ENCODE measurements at regions of chr3 and their contacts with region 1.

Region 1: GRCh38 chr3:17055374-17056276 is 170.9 kb downstream of the PLCL2 start:
- DNase-seq: peak; percentile 90
- ATAC-seq: peak; percentile 79
- H3K4me3 ChIP-seq: no peak overlapping the region
- H3K27ac ChIP-seq: peak overlapping the region; percentile 97
- H3K4me1 ChIP-seq: peaks cover 34% of the 10 kb centered on the region
- H3K27me3 ChIP-seq: no peaks in the 10 kb centered on the region
- CTCF ChIP-seq: no peak
- EP300 ChIP-seq: peak; percentile 73 to 88
- POLR2A ChIP-seq: no peak
- RAD21 ChIP-seq: peak; percentile 16; the same call in 1 of the 2 replicates

Region 2: GRCh38 chr3:16467393-16467792 is 588.2 kb before region 1 on chr3:
- CTCF ChIA-PET with region 1: no interaction called
- POLR2A ChIA-PET with region 1: no interaction called
- RAD21 ChIA-PET with region 1: no interaction called
- SMC1A ChIA-PET with region 1: no interaction called
- in situ Hi-C with region 1: no loop called
- intact Hi-C with region 1: no loop called
- DNase-seq: peak; percentile 28
- ATAC-seq: peak; percentile 93
- H3K4me3 ChIP-seq: no peak overlapping the region
- H3K27ac ChIP-seq: peak overlapping the region; percentile 53
- H3K4me1 ChIP-seq: peaks cover 28% of the 10 kb centered on the region
- H3K27me3 ChIP-seq: no peaks in the 10 kb centered on the region
- CTCF ChIP-seq: no peak
- EP300 ChIP-seq: no peak
- POLR2A ChIP-seq: peak; percentile 49; the same call in 1 of the 2 replicates
- RAD21 ChIP-seq: no peak

Region 3: GRCh38 chr3:16741103-16741758 is 314.4 kb before region 1 on chr3:
- CTCF ChIA-PET with region 1: no interaction called
- POLR2A ChIA-PET with region 1: no interaction called
- RAD21 ChIA-PET with region 1: no interaction called
- SMC1A ChIA-PET with region 1: no interaction called
- in situ Hi-C with region 1: no loop called
- intact Hi-C with region 1: no loop called
- DNase-seq: no peak
- ATAC-seq: no peak
- H3K4me3 ChIP-seq: no peak overlapping the region
- H3K27ac ChIP-seq: no peak overlapping the region
- H3K4me1 ChIP-seq: no peaks in the 10 kb centered on the region
- H3K27me3 ChIP-seq: no peaks in the 10 kb centered on the region; a peak in 1 of 4 replicates
- CTCF ChIP-seq: no peak
- EP300 ChIP-seq: no peak
- POLR2A ChIP-seq: no peak
- RAD21 ChIP-seq: no peak

Region 4: GRCh38 chr3:16897254-16897926 is 158.2 kb before region 1 on chr3:
- CTCF ChIA-PET with region 1: no interaction called
- POLR2A ChIA-PET with region 1: interaction called, 11 read pairs
- RAD21 ChIA-PET with region 1: no interaction called
- SMC1A ChIA-PET with region 1: no interaction called
- in situ Hi-C with region 1: no loop called
- intact Hi-C with region 1: no loop called
- DNase-seq: peak; percentile 52
- ATAC-seq: peak; percentile 79
- H3K4me3 ChIP-seq: peak overlapping the region; percentile 47; the same call in 1 of the 2 replicates
- H3K27ac ChIP-seq: peak overlapping the region; percentile 79
- H3K4me1 ChIP-seq: peaks cover 26% of the 10 kb centered on the region
- H3K27me3 ChIP-seq: no peaks in the 10 kb centered on the region
- CTCF ChIP-seq: no peak
- EP300 ChIP-seq: peak in 1 of 2 experiments; percentile 47; a peak in 1 of 4 replicates
- POLR2A ChIP-seq: no peak
- RAD21 ChIP-seq: no peak

Region 5: GRCh38 chr3:17044855-17045254 is 10.8 kb before region 1 on chr3:
- CTCF ChIA-PET with region 1: interaction called, 3 read pairs
- POLR2A ChIA-PET with region 1: no interaction called
- RAD21 ChIA-PET with region 1: interaction called, 4 read pairs
- SMC1A ChIA-PET with region 1: interaction called, 13 read pairs
- in situ Hi-C with region 1: no loop called
- intact Hi-C with region 1: no loop called
- DNase-seq: no peak
- ATAC-seq: peak; percentile 84
- H3K4me3 ChIP-seq: no peak overlapping the region
- H3K27ac ChIP-seq: peak overlapping the region; percentile 72
- H3K4me1 ChIP-seq: peaks cover 38% of the 10 kb centered on the region
- H3K27me3 ChIP-seq: no peaks in the 10 kb centered on the region
- CTCF ChIP-seq: no peak
- EP300 ChIP-seq: peak; percentile 85 to 87; a peak in 3 of 4 replicates
- POLR2A ChIP-seq: no peak
- RAD21 ChIP-seq: 0 out of 2 replicates have a peak, but pooled peaks have one; percentile 5

Region 6: DNA sequence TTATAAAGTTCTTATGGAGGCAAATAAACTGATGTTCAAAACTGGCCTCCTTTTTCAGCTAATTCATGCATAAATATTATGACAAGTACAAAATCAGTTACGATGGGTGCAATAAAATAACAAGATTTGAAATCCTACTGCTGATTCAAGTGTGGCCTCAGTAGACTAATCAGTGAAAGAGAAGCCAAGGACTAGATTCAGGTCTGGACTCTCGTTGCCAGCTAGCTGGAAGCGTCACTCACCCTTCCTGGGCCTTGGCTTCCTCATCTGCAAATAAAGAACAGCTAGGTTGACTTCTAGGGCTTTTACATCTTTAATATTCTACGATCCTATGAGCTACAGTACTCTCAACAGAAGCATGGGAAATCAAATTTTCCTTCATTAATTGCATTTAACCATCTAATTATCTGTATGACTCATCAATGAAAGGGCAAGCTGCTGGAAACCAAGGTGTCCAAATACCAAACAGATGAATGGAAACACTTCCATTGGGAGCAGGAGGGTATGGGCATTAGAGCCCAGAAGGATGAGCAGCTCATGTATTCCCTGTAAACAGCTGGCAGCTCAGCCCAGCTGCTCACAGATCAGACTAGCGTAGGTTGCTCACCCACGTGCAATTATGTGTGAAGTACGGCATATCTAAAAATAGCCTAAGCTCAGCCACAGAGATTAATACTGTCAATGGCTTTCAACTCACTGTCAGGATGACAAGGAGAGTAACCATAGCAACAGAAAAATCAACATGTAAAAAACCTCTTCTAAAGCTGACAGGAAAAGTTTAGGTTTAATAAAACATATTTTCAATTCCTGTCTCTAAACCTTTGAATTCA is 124.0 kb after region 1 on chr3:
- CTCF ChIA-PET with region 1: interaction called, 3 read pairs
- POLR2A ChIA-PET with region 1: no interaction called
- RAD21 ChIA-PET with region 1: no interaction called
- SMC1A ChIA-PET with region 1: interaction called, 5 read pairs
- in situ Hi-C with region 1: no loop called
- intact Hi-C with region 1: loop called (anchors 2 kb)
- DNase-seq: peak; percentile 56
- ATAC-seq: peak; percentile 84
- H3K4me3 ChIP-seq: no peak overlapping the region
- H3K27ac ChIP-seq: no peak overlapping the region
- H3K4me1 ChIP-seq: peaks cover 38% of the 10 kb centered on the region
- H3K27me3 ChIP-seq: no peaks in the 10 kb centered on the region
- CTCF ChIP-seq: no peak
- EP300 ChIP-seq: peak; percentile 82 to 97
- POLR2A ChIP-seq: no peak
- RAD21 ChIP-seq: no peak

Measured in GM12878 (cell line).